ENCODE measurements at regions of chr6 and their contacts with region 1.

Region 1: DNA sequence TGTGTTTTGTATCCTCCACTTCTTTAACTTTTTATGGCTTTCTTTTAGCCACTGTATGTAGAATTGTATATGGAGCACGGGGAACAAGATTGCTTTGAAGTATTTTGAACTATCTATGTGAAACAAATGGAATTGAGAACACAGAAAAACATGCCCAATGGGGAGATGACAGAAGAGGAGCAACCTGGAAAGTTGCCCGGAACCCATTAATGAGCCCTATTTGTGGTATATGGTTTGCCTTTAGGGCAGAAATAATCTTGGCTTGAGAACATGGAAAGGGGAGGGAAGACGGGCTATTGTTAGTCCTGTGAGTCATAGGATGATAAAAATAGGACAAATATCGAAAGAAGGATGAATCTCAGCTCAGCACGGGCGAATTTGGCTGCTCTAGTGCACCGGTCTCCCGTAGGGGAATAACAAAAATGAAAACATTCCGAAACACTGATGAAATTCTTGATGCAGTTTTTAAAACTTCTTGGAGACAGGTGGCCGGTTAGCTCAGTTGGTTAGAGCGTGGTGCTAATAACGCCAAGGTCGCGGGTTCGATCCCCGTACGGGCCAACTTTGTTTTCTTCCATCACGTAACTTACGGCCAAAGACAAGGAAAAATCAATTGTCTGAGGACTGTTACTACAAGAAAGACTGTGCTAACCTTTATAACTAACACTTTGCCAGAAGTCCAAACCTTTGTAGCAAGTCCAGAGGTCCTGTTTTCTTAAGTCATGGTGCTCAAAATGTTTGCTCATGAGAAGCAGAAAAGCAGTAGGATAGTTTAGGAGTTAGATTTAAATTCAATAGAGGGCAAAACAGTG is 15.7 kb downstream of the HMGN4 start:
- DNase-seq: peak; percentile 78
- H3K4me3 Mint-ChIP-seq: no peak overlapping the region
- H3K27ac Mint-ChIP-seq: no peak overlapping the region
- H3K4me1 Mint-ChIP-seq: peaks cover 22% of the 10 kb centered on the region
- H3K27me3 Mint-ChIP-seq: peaks cover 3% of the 10 kb centered on the region

Region 2: DNA sequence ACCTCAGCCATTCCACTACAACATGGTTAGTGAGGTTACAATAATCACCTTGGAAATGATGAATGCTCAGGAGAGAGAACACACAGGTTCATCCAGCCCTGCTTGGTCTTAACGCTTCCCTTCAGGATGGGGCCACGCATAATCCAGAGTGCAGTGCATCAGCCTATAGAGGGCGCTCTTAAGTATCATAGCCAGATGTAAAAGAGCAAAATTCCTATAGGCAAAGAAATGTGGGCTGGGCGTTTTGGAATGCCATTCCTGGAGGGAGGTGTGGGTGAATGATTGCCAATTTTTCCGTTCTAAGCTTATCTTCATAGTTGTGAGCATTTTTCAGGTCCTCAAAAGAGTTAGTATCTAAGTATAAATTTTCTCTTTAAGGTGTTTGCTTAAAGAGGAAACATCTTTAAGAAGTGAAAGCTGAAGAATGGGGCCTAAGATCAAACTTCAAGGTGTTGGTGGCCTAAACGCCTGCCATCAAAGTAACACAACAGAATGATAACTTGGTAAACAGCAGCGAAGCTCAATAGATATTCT is 1619.9 kb before region 1 on chr6:
- CTCF ChIA-PET with region 1: no interaction called
- POLR2A ChIA-PET with region 1: no interaction called
- DNase-seq: peak; percentile 68
- H3K4me3 Mint-ChIP-seq: peak overlapping the region; percentile 92
- H3K27ac Mint-ChIP-seq: peak overlapping the region; percentile 99
- H3K4me1 Mint-ChIP-seq: peaks cover 58% of the 10 kb centered on the region
- H3K27me3 Mint-ChIP-seq: no peaks in the 10 kb centered on the region

Region 3: GRCh38 chr6:26457806-26458688 is 95.8 kb before region 1 on chr6 and contains the start of gene BTN2A1:
- CTCF ChIA-PET with region 1: no interaction called
- POLR2A ChIA-PET with region 1: no interaction called
- DNase-seq: peak; percentile 85
- H3K4me3 Mint-ChIP-seq: peak within 1 kb of the TSS; percentile 99
- H3K27ac Mint-ChIP-seq: peak within 1 kb of the TSS; percentile 97
- H3K4me1 Mint-ChIP-seq: peaks cover 53% of the 10 kb centered on the region
- H3K27me3 Mint-ChIP-seq: no peaks in the 10 kb centered on the region
- total RNA-seq, gene BTN2A1: 33.7 to 34.3 TPM

Region 4: GRCh38 chr6:26537846-26538571 is 15.8 kb before region 1 on chr6 and contains the start of gene HMGN4:
- CTCF ChIA-PET with region 1: interaction called, 12 read pairs
- POLR2A ChIA-PET with region 1: no interaction called
- DNase-seq: peak; percentile 86
- H3K4me3 Mint-ChIP-seq: peak within 1 kb of the TSS; percentile 85
- H3K27ac Mint-ChIP-seq: peak within 1 kb of the TSS; percentile 99
- H3K4me1 Mint-ChIP-seq: peaks cover 62% of the 10 kb centered on the region
- H3K27me3 Mint-ChIP-seq: no peaks in the 10 kb centered on the region
- total RNA-seq, gene HMGN4: 85.7 to 93.0 TPM

Region 5: DNA sequence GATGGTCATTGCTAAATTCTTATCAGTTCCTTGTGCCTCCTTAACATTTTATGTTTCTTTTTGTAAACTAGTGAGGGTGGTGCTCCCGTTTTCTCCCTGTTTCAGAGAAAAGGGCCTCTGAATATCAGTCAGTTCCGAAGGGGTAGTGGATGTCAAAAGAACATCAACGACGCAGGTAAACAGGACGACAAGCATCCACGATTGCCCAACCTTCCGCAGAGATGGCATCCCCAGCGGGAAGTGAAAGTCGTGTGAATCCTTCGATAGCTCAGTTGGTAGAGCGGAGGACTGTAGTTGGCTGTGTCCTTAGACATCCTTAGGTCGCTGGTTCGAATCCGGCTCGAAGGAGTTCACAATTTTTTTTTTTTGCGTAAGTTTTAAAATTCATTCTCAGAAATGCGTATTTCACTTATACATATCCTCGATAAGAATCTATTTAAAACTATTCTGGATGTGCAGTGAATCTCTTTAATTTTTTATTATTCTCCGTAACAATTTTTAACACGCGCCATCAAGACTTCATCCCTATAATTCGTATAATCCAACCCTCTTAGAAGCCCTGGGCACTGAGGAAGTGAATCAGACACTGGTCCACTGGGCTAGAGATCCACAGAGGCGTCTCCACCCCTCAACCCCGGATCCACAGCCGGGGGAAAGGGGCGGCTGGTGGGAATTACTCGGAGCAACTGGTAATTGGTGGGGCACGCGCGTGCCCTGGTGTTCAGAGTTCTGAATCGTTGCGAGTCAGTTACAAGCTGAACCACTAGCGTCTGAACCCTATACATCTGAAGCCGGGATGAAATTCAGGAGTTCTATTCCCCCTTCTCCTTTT is 15.0 kb after region 1 on chr6:
- CTCF ChIA-PET with region 1: interaction called, 10 read pairs
- POLR2A ChIA-PET with region 1: interaction called, 7 read pairs
- DNase-seq: peak; percentile 97
- H3K4me3 Mint-ChIP-seq: peak overlapping the region; percentile 90
- H3K27ac Mint-ChIP-seq: peak overlapping the region; percentile 94
- H3K4me1 Mint-ChIP-seq: peaks cover 41% of the 10 kb centered on the region
- H3K27me3 Mint-ChIP-seq: peaks cover 7% of the 10 kb centered on the region

Measured in activated CD4-positive, alpha-beta T cell treated with anti-CD3 and anti-CD28 coated beads, Interleukin-2, amount 10 ng/mL, durations not matched to agents 7 days and 5 days (primary cell).